PC-3 (cell line): ENCODE measurements at regions of chr3 and their contacts with region 1.

Region 1: GRCh38 chr3:184135149-184135910 is at the start of gene EIF2B5:
- DNase-seq: peak; percentile 87
- ATAC-seq: peak; percentile 63
- H3K4me3 ChIP-seq: peak within 1 kb of the TSS; percentile 79
- H3K27ac ChIP-seq: peak within 1 kb of the TSS; percentile 93
- H3K4me1 ChIP-seq: peaks cover 27% of the 10 kb centered on the region
- H3K27me3 ChIP-seq: no peaks in the 10 kb centered on the region
- CTCF ChIP-seq: peak; percentile 52
- total RNA-seq, gene EIF2B5: 51.3 and 57.0 TPM in 2 replicates

Region 2: DNA sequence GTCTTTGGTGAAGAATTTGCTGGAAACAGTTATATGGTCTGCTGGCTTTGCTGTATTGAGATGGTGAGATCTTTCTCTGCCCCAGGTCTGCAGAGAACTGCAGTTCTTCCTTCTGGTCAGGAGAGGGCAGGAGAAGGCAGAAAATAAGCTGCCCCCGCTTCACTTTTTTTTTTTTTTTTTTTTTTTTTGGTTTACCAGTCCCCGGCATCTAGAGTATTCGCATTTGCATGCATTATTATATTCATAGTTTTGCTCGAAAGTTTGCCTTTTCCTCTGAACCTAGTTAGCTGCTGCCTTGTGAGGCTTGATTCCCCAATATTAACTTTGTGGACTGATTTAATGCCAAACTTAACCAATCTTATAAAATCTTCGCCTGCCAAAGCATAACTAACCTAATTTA is 240.0 kb before region 1 on chr3:
- CTCF ChIA-PET with region 1: no interaction called
- POLR2A ChIA-PET with region 1: no interaction called
- intact Hi-C with region 1: loop called (anchors 5 kb)
- DNase-seq: peak; percentile 71
- ATAC-seq: peak; percentile 67
- H3K4me3 ChIP-seq: no peak overlapping the region
- H3K27ac ChIP-seq: no peak overlapping the region
- H3K4me1 ChIP-seq: no peaks in the 10 kb centered on the region
- H3K27me3 ChIP-seq: no peaks in the 10 kb centered on the region
- CTCF ChIP-seq: peak; percentile 88

Region 3: DNA sequence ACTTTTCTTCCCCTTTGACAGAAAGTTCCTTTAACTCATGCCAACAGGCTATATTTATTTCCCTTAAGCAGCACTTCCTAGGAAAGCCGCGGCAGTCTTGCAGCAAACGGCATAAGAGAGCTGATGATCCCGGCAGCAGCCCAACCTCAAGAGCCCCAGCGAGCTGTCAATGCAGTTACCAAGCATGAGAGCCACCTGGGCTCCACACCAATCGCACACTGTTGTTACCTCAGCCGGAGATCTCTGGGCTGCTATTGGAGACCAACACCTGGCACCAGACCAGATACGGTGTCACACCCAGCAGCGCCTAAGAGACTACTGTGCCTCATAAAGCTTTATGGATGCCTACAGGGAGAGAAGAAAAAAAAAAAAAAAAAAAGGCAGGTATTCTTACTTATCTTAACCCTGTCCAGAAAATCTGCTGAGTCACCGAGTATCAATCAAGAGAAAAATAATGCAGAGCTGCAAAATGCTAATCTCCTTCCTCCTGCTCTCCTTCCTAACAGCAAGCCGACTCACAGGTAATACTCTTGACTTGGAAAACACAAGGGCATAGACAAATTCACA is 129.3 kb before region 1 on chr3:
- CTCF ChIA-PET with region 1: no interaction called
- POLR2A ChIA-PET with region 1: interaction called, 11 read pairs
- intact Hi-C with region 1: no loop called
- DNase-seq: peak; percentile 98
- ATAC-seq: peak; percentile 90
- H3K4me3 ChIP-seq: peak overlapping the region; percentile 42; the same call in 1 of the 2 replicates
- H3K27ac ChIP-seq: peak overlapping the region; percentile 89
- H3K4me1 ChIP-seq: peaks cover 49% of the 10 kb centered on the region
- H3K27me3 ChIP-seq: no peaks in the 10 kb centered on the region
- CTCF ChIP-seq: no peak

Region 4: GRCh38 chr3:184017672-184018423 is 117.5 kb before region 1 on chr3 and contains the start of gene ABCC5:
- CTCF ChIA-PET with region 1: no interaction called
- POLR2A ChIA-PET with region 1: no interaction called
- intact Hi-C with region 1: loop called (anchors 2 kb)
- DNase-seq: peak; percentile 93
- ATAC-seq: peak; percentile 97
- H3K4me3 ChIP-seq: peak within 1 kb of the TSS; percentile 98
- H3K27ac ChIP-seq: peak within 1 kb of the TSS; percentile 26; the same call in 1 of the 2 replicates
- H3K4me1 ChIP-seq: peaks cover 29% of the 10 kb centered on the region
- H3K27me3 ChIP-seq: no peaks in the 10 kb centered on the region
- CTCF ChIP-seq: peak; percentile 41; the same call in 1 of the 2 replicates
- total RNA-seq, gene ABCC5: 16.1 and 24.9 TPM in 2 replicates

Region 5: DNA sequence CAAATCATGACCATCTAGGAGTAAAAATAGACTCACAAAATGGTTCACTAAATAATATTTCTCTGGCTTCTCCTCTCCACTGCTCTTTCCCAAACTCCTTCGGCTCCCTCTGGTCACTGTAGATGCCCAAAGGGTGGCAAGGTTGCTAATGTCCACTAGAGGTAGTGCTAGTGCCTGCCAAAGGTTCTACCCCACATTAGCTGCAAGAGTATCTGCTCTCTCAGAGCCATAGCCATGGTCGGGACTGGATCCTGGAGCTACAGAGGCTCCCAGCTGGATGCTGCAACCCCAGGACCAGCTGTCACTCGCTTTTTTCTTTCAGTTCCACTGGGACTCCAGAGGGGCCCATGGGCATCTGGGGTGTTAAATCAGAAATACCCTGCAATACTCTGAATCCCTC is 95.3 kb before region 1 on chr3:
- CTCF ChIA-PET with region 1: interaction called, 3 read pairs
- POLR2A ChIA-PET with region 1: interaction called, 4 read pairs
- intact Hi-C with region 1: loop called (anchors 5 kb)
- DNase-seq: peak; percentile 67
- ATAC-seq: peak; percentile 99
- H3K4me3 ChIP-seq: no peak overlapping the region
- H3K27ac ChIP-seq: no peak overlapping the region
- H3K4me1 ChIP-seq: no peaks in the 10 kb centered on the region
- H3K27me3 ChIP-seq: no peaks in the 10 kb centered on the region; the same call in 1 of the 2 replicates
- CTCF ChIP-seq: peak; percentile 71

Region 6: GRCh38 chr3:184154885-184155643 is 19.7 kb after region 1 on chr3 and contains the start of gene DVL3:
- CTCF ChIA-PET with region 1: no interaction called
- POLR2A ChIA-PET with region 1: interaction called, 6 read pairs
- intact Hi-C with region 1: loop called (anchors 1 kb)
- DNase-seq: peak; percentile 64
- ATAC-seq: peak; percentile 84
- H3K4me3 ChIP-seq: peak within 1 kb of the TSS; percentile 90
- H3K27ac ChIP-seq: peak within 1 kb of the TSS; percentile 28
- H3K4me1 ChIP-seq: peaks cover 13% of the 10 kb centered on the region
- H3K27me3 ChIP-seq: no peaks in the 10 kb centered on the region
- CTCF ChIP-seq: no peak
- total RNA-seq, gene DVL3: 50.6 and 56.1 TPM in 2 replicates

Region 7: DNA sequence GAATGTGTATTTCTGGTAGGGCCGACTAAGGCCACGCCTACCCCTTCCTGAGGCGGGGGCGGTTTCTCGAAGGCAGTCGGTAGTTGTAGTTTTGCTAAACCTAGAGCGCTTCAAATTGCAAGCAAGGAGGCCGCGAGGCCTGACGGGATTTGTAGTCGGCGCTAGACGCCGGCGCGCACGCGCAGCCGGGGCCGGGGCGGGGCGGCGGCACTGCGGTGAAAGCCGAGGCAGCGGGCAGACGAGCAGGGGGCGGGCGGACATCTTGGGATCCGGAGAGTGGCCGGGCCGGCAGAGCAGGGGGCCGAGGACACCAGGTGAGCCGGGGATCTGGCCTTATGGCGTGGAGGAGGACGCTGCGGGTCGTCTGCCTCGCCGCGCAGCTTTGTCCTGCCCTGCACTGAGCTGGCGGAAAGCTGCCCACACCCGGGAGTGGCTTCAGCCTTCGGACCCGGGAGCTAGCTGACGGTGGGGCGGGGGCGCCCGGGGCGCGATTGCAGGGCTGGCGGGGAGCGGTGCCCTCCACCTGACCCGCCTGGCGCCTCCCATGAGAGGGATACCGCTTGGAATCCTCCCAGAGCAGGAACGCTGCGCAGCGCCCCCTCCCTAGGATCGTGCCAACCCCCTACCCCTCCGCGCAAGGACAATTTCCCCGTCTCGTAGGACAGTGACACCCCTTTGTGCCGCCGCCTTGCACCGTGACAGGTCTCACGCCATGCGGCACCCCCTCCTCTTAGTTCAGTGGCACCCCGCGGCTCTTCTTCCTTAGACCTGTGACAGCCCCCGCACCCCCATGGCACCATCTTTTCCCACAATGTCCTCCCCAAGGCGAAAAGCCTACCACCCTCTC is 39.5 kb after region 1 on chr3 and contains the start of gene AP2M1:
- CTCF ChIA-PET with region 1: no interaction called
- POLR2A ChIA-PET with region 1: no interaction called
- intact Hi-C with region 1: loop called (anchors 1 kb)
- DNase-seq: peak; percentile 99
- ATAC-seq: peak; percentile 86
- H3K4me3 ChIP-seq: peak within 1 kb of the TSS; percentile 89
- H3K27ac ChIP-seq: peak within 1 kb of the TSS; percentile 62
- H3K4me1 ChIP-seq: peaks cover 54% of the 10 kb centered on the region
- H3K27me3 ChIP-seq: no peaks in the 10 kb centered on the region
- CTCF ChIP-seq: peak; percentile 19; the same call in 1 of the 2 replicates
- total RNA-seq, gene AP2M1: 522 and 538 TPM in 2 replicates